ENCODE measurements at regions of chr16 and their contacts with region 1.

Region 1: GRCh38 chr16:67422202-67422601 is 5.9 kb upstream of the ZDHHC1 start:
- DNase-seq: no peak
- ATAC-seq: no peak
- H3K4me3 ChIP-seq: no peak overlapping the region
- H3K4me3 Mint-ChIP-seq: no peak overlapping the region
- H3K27ac ChIP-seq: no peak overlapping the region
- H3K27ac Mint-ChIP-seq: no peak overlapping the region
- H3K4me1 ChIP-seq: no peaks in the 10 kb centered on the region
- H3K4me1 Mint-ChIP-seq: peaks cover 0 to 4% (median 4%) of the 10 kb centered on the region in 3 donors
- H3K27me3 ChIP-seq: peaks cover 14 to 52% of the 10 kb centered on the region in 2 experiments
- H3K27me3 Mint-ChIP-seq: peaks cover 34 to 40% of the 10 kb centered on the region in 2 donors

Region 2: DNA sequence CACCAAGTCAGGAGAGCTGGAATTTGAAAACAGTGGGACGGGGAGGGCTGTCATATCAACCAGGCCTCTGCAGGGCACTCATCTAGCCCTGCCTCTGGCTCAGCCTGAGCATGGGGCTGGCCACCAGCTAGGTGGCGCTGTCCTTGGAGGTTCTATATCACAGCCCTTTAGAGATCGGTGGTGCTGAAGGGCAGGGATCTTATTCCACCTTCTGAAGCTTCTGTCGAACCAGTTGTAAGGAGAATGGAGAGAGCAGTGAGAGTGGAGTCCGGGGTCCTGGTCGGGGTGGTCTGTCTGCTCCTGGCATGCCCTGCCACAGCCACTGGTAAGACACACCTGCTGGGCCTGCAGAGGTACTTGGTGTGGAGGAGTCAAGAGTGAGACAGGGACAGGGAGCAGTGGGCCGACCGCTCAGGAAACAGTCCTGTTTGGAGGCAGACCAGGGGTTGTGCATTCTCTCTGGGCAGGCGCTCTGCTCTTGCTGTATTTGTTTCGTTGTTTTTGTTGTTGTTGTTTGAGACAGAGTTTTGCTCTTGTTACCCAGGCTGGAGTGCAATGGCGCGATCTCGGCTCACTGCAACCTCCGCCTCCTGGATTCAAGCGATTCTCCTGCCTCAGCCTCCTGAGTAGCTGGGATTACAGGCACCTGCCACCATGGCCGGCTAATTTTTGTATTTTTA is 461.0 kb before region 1 on chr16 and contains the start of gene CES3:
- CTCF ChIA-PET with region 1: interaction called in 1 of 2 experiments, 14 read pairs
- POLR2A ChIA-PET with region 1: no interaction called
- DNase-seq: peak in 33 of 35 experiments; percentile 15 to 65 (median 41)
- ATAC-seq: peak; percentile 78 to 91 (median 88)
- H3K4me3 ChIP-seq: no peak within 1 kb of the TSS
- H3K4me3 Mint-ChIP-seq: no peak within 1 kb of the TSS
- H3K27ac ChIP-seq: no peak within 1 kb of the TSS
- H3K27ac Mint-ChIP-seq: no peak within 1 kb of the TSS
- H3K4me1 ChIP-seq: peaks cover 0 to 3% of the 10 kb centered on the region in 2 experiments
- H3K4me1 Mint-ChIP-seq: peaks cover 10 to 26% (median 17%) of the 10 kb centered on the region in 3 donors
- H3K27me3 ChIP-seq: peaks cover 0 to 27% of the 10 kb centered on the region in 2 experiments
- H3K27me3 Mint-ChIP-seq: peaks cover 0 to 7% of the 10 kb centered on the region in 2 donors
- total RNA-seq, gene CES3: 0.10 to 0.88 (median 0.58) TPM

Region 3: DNA sequence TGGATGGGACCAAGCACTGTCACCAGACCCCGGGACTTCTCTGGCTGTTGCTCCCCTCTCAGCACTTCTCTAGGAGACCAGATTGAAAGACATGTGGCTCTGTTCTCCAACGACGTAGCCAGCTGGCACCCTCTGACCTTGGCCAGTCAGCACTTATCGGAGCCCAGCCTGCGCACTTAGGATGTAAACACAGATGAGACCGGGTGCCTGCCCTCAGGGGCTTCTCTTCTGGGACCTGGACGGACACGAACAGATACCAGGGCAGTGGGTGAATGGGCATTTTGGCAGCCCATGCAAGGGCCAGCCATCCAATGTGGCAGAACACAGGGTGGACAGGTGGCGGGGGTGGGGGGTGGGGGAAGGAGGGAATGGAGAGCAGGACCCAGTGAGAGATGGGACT is 12.6 kb before region 1 on chr16:
- CTCF ChIA-PET with region 1: no interaction called
- POLR2A ChIA-PET with region 1: no interaction called
- DNase-seq: no peak
- ATAC-seq: no peak
- H3K4me3 ChIP-seq: no peak overlapping the region
- H3K4me3 Mint-ChIP-seq: no peak overlapping the region
- H3K27ac ChIP-seq: no peak overlapping the region
- H3K27ac Mint-ChIP-seq: no peak overlapping the region
- H3K4me1 ChIP-seq: no peaks in the 10 kb centered on the region
- H3K4me1 Mint-ChIP-seq: no peaks in the 10 kb centered on the region
- H3K27me3 ChIP-seq: peaks cover 0 to 27% of the 10 kb centered on the region in 2 experiments
- H3K27me3 Mint-ChIP-seq: peaks cover 5 to 10% of the 10 kb centered on the region in 2 donors

Measured in T-cell (primary cell).